ENCODE measurements at regions of chr21 and their contacts with region 1.

Region 1: DNA sequence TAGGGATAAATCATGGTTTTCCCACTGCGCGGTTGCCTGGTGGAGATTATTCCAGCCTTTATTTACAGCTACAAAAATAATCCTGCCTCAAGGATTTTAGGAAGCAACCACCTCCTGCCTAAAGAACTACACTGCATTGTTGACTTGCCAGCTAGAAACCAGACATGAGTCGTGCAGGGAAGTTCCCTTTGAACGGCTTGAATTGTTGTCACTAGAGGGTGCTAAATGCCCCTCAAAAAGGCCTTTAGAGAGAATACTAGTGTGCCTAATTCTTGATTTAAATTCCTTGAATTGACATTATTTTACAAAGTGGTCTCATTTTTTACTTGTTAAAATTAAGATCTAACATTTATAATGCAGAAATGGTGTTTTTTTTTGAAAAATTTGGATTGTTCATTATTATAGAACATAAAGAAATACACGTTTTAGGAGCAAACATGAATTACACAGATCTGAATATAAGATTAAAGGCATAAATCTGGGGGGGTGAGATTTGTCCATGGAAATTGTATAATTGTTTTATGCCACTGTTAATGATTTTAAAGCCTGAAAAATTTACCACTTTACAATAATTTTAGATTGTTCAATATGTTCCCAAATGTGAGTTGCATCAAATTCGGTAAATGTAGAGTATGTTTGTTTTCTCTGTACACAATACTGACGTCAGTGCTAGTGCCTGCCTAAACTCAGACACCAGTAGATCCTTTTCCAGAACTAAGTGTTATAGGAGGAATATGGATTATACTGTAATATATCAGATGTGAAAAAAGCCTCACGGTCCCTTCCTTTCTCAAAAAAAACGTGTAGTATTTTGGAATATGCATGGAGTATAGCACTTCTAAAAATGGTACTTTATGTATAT is 7.6 kb upstream of the ERG start:
- ATAC-seq: peak; percentile 79 to 94 (median 88)
- H3K4me3 ChIP-seq: no peak overlapping the region
- H3K27ac ChIP-seq: no peak overlapping the region
- H3K4me1 ChIP-seq: peaks cover 6 to 11% of the 10 kb centered on the region in 2 donors

Region 2: GRCh38 chr21:38712071-38712470 is 206.2 kb after region 1 on chr21:
- in situ Hi-C with region 1: loop called in 1 of 9 experiments (anchors 25 kb)
- ATAC-seq: peak; percentile 15 to 90 (median 71)
- H3K4me3 ChIP-seq: no peak overlapping the region
- H3K27ac ChIP-seq: no peak overlapping the region
- H3K4me1 ChIP-seq: peaks cover 0 to 7% of the 10 kb centered on the region in 2 donors

Region 3: GRCh38 chr21:38733973-38734546 is 228.2 kb after region 1 on chr21:
- in situ Hi-C with region 1: loop called in 1 of 9 experiments (anchors 25 kb)
- ATAC-seq: peak; percentile 64 to 97 (median 92)
- H3K4me3 ChIP-seq: peak overlapping the region; percentile 9 to 30 (median 18)
- H3K27ac ChIP-seq: no peak overlapping the region
- H3K4me1 ChIP-seq: peaks cover 0 to 6% of the 10 kb centered on the region in 2 donors

Region 4: GRCh38 chr21:38798481-38798882 is 292.6 kb after region 1 on chr21:
- in situ Hi-C with region 1: no loop called
- ATAC-seq: peak in 6 of 8 experiments; percentile 48 to 76 (median 60)
- H3K4me3 ChIP-seq: no peak overlapping the region
- H3K27ac ChIP-seq: no peak overlapping the region
- H3K4me1 ChIP-seq: peaks cover 5 to 6% of the 10 kb centered on the region in 2 donors

Region 5: DNA sequence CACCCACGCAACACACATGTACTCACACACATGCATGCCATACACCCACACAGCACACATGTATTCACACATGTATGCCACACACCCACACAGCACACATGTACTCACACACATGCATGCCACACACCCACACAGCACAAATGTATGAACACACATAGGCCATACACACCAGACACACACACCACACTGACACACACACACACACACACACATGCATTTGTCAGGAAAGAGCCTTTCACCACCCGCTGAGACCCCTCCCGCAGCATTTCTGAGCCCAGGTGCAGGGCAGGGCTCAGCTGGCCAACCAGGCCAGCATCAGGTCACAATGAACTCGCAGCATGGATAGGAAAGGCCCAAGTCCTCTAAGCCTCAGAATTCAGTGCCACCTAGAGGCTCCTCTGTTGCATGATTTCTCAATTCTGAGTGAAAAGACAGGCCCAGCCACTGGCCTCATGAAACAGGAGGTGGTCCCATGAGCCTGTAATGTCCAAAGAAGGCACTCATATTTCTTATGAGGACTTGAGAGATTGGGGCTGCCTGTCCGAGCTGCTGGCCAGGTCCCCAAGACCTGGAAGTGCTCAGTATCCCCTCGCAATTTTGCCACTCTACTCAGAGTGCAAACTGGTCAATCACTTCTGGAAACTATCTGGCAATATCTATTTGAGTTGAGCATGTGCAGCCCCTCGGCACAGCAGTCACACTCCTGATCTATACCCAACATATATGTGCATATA is 620.0 kb after region 1 on chr21:
- in situ Hi-C with region 1: loop called in 4 of 9 experiments (anchors 25 kb)
- ATAC-seq: peak; percentile 90 to 100 (median 96)
- H3K4me3 ChIP-seq: no peak overlapping the region
- H3K27ac ChIP-seq: no peak overlapping the region
- H3K4me1 ChIP-seq: no peaks in the 10 kb centered on the region

Region 6: DNA sequence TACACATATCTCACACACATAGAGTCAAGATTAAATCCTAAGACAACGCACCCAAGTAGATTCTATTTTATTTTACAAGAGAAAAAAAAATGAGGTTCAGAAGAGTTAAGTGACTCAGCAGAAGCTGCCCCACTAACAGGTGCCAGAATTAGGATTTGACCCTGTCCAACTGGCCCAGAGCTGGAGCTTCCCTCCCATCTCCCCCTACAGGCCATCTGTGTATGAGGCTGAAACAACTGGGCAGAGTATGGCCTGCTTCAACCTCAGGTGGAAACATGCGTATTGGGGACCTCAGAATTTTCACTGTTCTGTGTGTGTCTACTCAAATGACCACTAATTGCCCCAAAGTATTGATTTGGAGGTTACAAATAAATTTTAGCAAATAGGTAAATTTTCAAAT is 647.5 kb after region 1 on chr21:
- in situ Hi-C with region 1: loop called in 5 of 9 experiments (anchors 25 kb)
- ATAC-seq: peak in 3 of 8 experiments; percentile 61 to 68 (median 68)
- H3K4me3 ChIP-seq: no peak overlapping the region
- H3K27ac ChIP-seq: no peak overlapping the region
- H3K4me1 ChIP-seq: no peaks in the 10 kb centered on the region

Measured in motor neuron (in vitro differentiated cells).